Right cardiac atrium (tissue), 5 donors: ENCODE measurements at regions of chr10 and their contacts with region 1.

Region 1: GRCh38 chr10:60629332-60629731 is 148.9 kb upstream of the CDK1 start:
- DNase-seq: no peak
- ATAC-seq: no peak
- H3K4me3 ChIP-seq: no peak overlapping the region
- H3K27ac ChIP-seq: no peak overlapping the region
- H3K4me1 ChIP-seq: no peaks in the 10 kb centered on the region
- H3K27me3 ChIP-seq: no peaks in the 10 kb centered on the region

Region 2: GRCh38 chr10:60454336-60454735 is 175.0 kb before region 1 on chr10:
- intact Hi-C with region 1: loop called in 1 of 4 experiments (anchors 5 kb)
- DNase-seq: no peak
- ATAC-seq: peak; percentile 70 to 79
- H3K4me3 ChIP-seq: no peak overlapping the region
- H3K27ac ChIP-seq: peak overlapping the region; percentile 52
- H3K4me1 ChIP-seq: peaks cover 3% of the 10 kb centered on the region
- H3K27me3 ChIP-seq: no peaks in the 10 kb centered on the region

Region 3: DNA sequence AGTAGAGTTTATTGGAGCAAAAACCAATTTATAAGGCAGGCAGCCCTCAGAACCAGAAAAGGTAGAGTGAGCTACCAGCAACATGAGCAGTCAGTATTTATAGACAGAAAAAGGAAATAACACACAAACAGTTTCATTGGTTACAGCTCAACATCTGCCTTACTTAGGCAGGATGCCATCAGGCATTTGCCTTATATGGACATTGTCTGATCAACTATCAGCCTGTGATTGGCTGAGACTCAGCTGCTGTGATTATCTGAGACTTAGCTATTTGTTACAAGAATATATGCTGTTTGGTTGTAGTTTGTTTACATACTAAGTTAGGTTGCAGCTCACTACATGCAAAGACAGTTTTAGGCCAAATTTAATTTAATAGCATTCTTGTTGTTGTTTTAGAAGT is 88.5 kb after region 1 on chr10:
- intact Hi-C with region 1: no loop called
- DNase-seq: no peak
- ATAC-seq: no peak
- H3K4me3 ChIP-seq: no peak overlapping the region
- H3K27ac ChIP-seq: no peak overlapping the region
- H3K4me1 ChIP-seq: no peaks in the 10 kb centered on the region
- H3K27me3 ChIP-seq: no peaks in the 10 kb centered on the region